Sigmoid colon (tissue), 7 donors: ENCODE measurements at regions of chr19 and their contacts with region 1.

Region 1: DNA sequence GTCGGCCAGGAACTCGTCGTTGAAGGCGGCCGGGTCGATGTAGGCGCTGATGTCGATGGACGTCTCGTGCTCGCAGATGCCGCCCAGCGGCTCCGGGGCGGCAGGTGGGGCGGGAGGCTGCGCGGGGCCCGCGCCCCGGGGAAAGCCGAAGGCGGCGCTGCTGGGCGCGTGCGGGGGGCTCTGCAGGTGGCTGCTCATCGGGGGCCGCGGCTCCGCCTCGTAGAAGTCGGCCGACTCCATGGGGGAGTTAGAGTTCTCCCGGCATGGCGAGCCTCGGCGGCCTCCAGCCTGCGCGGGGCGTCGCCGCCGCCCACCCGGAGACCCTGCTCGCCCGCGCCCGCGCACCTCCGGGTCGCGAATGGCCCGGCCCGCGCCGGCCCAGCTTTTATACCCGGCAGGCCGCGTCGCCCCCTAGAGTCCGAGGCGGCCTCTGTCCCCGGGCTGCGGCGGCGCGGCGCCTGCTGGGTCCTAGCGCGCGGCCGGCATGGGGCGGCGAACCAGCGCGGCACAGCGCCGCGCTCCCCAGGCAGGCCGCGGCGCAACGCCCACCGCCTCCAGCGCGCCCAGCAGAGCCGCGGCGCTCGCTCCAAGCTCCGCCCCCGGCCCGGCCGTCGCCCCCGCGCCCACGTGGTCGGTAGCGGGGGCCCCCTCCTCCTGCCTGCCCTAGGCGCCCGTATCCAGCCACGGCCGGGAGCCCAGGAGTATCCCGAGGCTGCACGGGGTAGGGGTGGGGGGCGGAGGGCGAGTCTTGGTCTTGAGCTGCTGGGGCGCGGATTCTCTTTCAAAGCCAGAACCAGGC is at the start of gene CEBPA:
- DNase-seq: peak; percentile 94
- H3K4me3 ChIP-seq: peak within 1 kb of the TSS; percentile 57 to 83 (median 63)
- H3K27ac ChIP-seq: peak within 1 kb of the TSS; percentile 85 to 91 (median 86)
- H3K4me1 ChIP-seq: peaks cover 0 to 50% (median 37%) of the 10 kb centered on the region in 4 donors
- H3K27me3 ChIP-seq: peaks cover 7 to 35% (median 11%) of the 10 kb centered on the region in 3 donors
- CTCF ChIP-seq: peak in 1 of 4 experiments; percentile 51
- EP300 ChIP-seq: no peak
- POLR2A ChIP-seq: no peak
- total RNA-seq, gene CEBPA: 2.9 to 16.1 (median 6.9) TPM

Region 2: DNA sequence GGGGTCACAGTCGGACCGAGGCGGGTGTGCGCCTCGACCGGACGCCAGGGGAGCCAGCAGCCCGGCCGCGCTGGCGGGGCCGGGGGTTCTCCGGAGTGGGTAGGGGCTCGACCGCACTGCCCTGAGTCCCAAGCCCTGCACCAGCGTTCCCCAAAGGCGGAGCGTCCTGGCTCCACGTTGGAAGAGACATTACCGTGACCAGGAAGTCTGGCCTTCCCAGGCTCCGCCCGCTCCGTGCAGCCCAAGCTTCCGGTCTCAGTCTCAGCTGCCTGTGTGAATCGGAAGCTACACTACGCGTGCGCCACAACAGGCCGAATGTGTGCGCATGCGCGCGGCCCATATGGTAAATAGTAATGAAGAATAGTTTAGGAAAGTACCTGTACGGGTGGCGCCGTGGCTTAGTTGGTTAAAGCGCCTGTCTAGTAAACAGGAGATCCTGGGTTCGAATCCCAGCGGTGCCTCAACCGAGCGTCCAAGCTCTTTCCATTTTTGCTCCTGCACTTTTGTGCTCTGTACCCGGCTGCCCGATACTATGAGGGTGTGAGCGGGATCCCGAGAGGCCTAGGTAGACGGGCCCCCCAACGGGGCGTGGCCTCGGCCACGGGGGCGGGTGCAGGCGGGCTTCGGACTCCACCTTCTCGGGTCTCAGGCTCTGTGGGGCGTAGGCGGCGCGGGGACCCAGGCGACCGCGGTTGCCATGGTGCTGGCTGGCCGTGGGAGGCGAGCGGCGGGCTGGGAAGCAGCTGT is 125.5 kb before region 1 on chr19:
- intact Hi-C with region 1: loop called (anchors 5 kb)
- DNase-seq: peak; percentile 97
- H3K4me3 ChIP-seq: peak overlapping the region; percentile 77 to 86 (median 80)
- H3K27ac ChIP-seq: peak overlapping the region; percentile 91 to 96 (median 94)
- H3K4me1 ChIP-seq: peaks cover 0 to 30% (median 25%) of the 10 kb centered on the region in 4 donors
- H3K27me3 ChIP-seq: no peaks in the 10 kb centered on the region
- CTCF ChIP-seq: peak in 1 of 4 experiments; percentile 49
- EP300 ChIP-seq: peak in 1 of 4 donors; percentile 10
- POLR2A ChIP-seq: peak; percentile 74 to 77

Region 3: GRCh38 chr19:33193865-33194362 is 108.5 kb before region 1 on chr19 and contains the start of gene LRP3:
- intact Hi-C with region 1: loop called (anchors 2 kb)
- DNase-seq: no peak
- H3K4me3 ChIP-seq: peak within 1 kb of the TSS; percentile 49 to 86 (median 78)
- H3K27ac ChIP-seq: peak within 1 kb of the TSS; percentile 69 to 76 (median 75)
- H3K4me1 ChIP-seq: peaks cover 0 to 20% (median 13%) of the 10 kb centered on the region in 4 donors
- H3K27me3 ChIP-seq: no peaks in the 10 kb centered on the region
- CTCF ChIP-seq: no peak
- EP300 ChIP-seq: no peak
- POLR2A ChIP-seq: no peak
- total RNA-seq, gene LRP3: 17.1 to 31.5 (median 21.8) TPM

Region 4: GRCh38 chr19:33235269-33235995 is 66.9 kb before region 1 on chr19:
- intact Hi-C with region 1: loop called (anchors 5 kb)
- DNase-seq: peak; percentile 85
- H3K4me3 ChIP-seq: no peak overlapping the region
- H3K27ac ChIP-seq: no peak overlapping the region
- H3K4me1 ChIP-seq: no peaks in the 10 kb centered on the region
- H3K27me3 ChIP-seq: peaks cover 0 to 23% (median 12%) of the 10 kb centered on the region in 3 donors
- CTCF ChIP-seq: peak; percentile 76 to 90 (median 84)
- EP300 ChIP-seq: no peak
- POLR2A ChIP-seq: no peak

Region 5: GRCh38 chr19:33373701-33374421 is 71.5 kb after region 1 on chr19 and contains the start of gene CEBPG:
- intact Hi-C with region 1: loop called (anchors 1 kb)
- DNase-seq: peak; percentile 78
- H3K4me3 ChIP-seq: peak within 1 kb of the TSS; percentile 55 to 83 (median 80)
- H3K27ac ChIP-seq: peak within 1 kb of the TSS; percentile 94 to 100 (median 96)
- H3K4me1 ChIP-seq: peaks cover 0 to 39% (median 32%) of the 10 kb centered on the region in 4 donors
- H3K27me3 ChIP-seq: no peaks in the 10 kb centered on the region
- CTCF ChIP-seq: no peak
- EP300 ChIP-seq: no peak
- POLR2A ChIP-seq: peak; percentile 18 to 49
- total RNA-seq, gene CEBPG: 18.6 to 27.8 (median 23.0) TPM

Region 6: GRCh38 chr19:33394006-33394849 is 91.9 kb after region 1 on chr19:
- intact Hi-C with region 1: loop called (anchors 5 kb)
- DNase-seq: peak; percentile 86
- H3K4me3 ChIP-seq: no peak overlapping the region
- H3K27ac ChIP-seq: peak overlapping the region in 2 of 4 donors; percentile 9 to 43
- H3K4me1 ChIP-seq: peaks cover 5 to 80% (median 76%) of the 10 kb centered on the region in 4 donors
- H3K27me3 ChIP-seq: no peaks in the 10 kb centered on the region
- CTCF ChIP-seq: no peak
- EP300 ChIP-seq: no peak
- POLR2A ChIP-seq: no peak

Region 7: GRCh38 chr19:33521480-33522370 is 219.4 kb after region 1 on chr19 and contains the start of gene PEPD:
- intact Hi-C with region 1: loop called (anchors 5 kb)
- DNase-seq: peak; percentile 95
- H3K4me3 ChIP-seq: peak within 1 kb of the TSS; percentile 67 to 98 (median 98)
- H3K27ac ChIP-seq: peak within 1 kb of the TSS; percentile 56 to 75 (median 71)
- H3K4me1 ChIP-seq: peaks cover 0 to 23% (median 19%) of the 10 kb centered on the region in 4 donors
- H3K27me3 ChIP-seq: no peaks in the 10 kb centered on the region
- CTCF ChIP-seq: no peak
- EP300 ChIP-seq: no peak
- POLR2A ChIP-seq: peak; percentile 9 to 27
- total RNA-seq, gene PEPD: 61.5 to 69.0 (median 64.9) TPM